ENCODE measurements at regions of chr11 and their contacts with region 1.

Region 1: DNA sequence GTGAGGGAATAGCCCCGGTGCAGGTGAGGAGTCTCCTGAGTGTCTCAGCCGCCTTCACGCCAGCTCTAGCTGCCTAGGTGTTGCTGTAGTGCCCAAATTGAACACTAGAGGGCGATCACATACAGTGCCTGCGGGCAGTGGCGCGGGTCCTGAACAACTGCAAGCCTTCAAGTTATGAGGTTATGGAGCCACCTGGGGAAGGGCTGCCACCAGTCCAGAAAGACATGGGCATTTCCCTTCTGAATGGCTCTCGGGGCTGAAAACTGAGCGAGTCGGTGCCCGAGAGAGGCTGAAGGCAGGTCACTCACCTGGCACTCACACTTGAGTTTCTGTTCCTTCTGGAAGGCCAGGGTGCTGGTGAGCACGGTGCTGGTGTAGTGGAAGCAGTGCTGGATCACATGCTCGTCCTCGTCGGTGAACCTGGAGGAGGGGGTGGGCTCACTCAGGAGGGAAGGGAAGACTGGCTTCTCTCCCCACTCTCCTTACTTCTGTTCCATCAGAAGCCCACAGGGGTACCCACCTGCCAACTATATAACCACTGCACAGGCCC is 88.4 kb downstream of the PDE2A start:
- DNase-seq: peak; percentile 82
- H3K4me3 Mint-ChIP-seq: peak overlapping the region; percentile 75
- H3K27ac Mint-ChIP-seq: no peak overlapping the region
- H3K4me1 Mint-ChIP-seq: peaks cover 25% of the 10 kb centered on the region
- H3K27me3 Mint-ChIP-seq: peaks cover 16% of the 10 kb centered on the region

Region 2: GRCh38 chr11:72483412-72484186 is 102.2 kb before region 1 on chr11:
- CTCF ChIA-PET with region 1: interaction called, 5 read pairs
- intact Hi-C with region 1: loop called (anchors 1 kb)
- DNase-seq: peak; percentile 52
- H3K4me3 Mint-ChIP-seq: no peak overlapping the region
- H3K27ac Mint-ChIP-seq: peak overlapping the region; percentile 26
- H3K4me1 Mint-ChIP-seq: peaks cover 7% of the 10 kb centered on the region
- H3K27me3 Mint-ChIP-seq: no peaks in the 10 kb centered on the region

Region 3: DNA sequence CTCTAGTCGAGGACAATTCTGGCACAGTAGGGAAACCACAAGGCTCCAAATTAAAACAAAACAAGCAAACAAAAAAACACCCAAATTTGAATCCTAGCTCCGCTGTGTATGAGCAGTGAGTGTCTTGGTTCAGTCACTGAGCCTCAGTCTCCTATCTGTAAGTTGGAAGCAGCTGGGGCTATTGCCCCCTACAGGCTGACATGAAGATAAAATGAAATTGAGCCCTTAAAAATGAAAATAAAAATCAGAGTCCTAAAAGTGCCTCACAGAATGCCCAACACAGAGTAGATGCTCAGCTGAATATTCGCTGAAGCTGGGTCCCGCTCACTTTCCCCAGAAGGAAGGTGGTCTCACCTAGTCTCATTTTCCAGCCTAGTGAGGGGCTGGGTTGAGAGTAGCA is 23.2 kb after region 1 on chr11:
- CTCF ChIA-PET with region 1: interaction called, 16 read pairs
- intact Hi-C with region 1: loop called (anchors 1 kb)
- DNase-seq: no peak
- H3K4me3 Mint-ChIP-seq: no peak overlapping the region
- H3K27ac Mint-ChIP-seq: no peak overlapping the region
- H3K4me1 Mint-ChIP-seq: peaks cover 2% of the 10 kb centered on the region
- H3K27me3 Mint-ChIP-seq: peaks cover 13% of the 10 kb centered on the region

Region 4: GRCh38 chr11:72642884-72643511 is 57.2 kb after region 1 on chr11:
- CTCF ChIA-PET with region 1: interaction called, 55 read pairs
- intact Hi-C with region 1: loop called (anchors 1 kb)
- DNase-seq: peak; percentile 55
- H3K4me3 Mint-ChIP-seq: peak overlapping the region; percentile 56
- H3K27ac Mint-ChIP-seq: no peak overlapping the region
- H3K4me1 Mint-ChIP-seq: no peaks in the 10 kb centered on the region
- H3K27me3 Mint-ChIP-seq: no peaks in the 10 kb centered on the region

Region 5: GRCh38 chr11:72683782-72684200 is 98.0 kb after region 1 on chr11:
- CTCF ChIA-PET with region 1: interaction called, 58 read pairs
- intact Hi-C with region 1: loop called (anchors 1 kb)
- DNase-seq: peak; percentile 81
- H3K4me3 Mint-ChIP-seq: no peak overlapping the region
- H3K27ac Mint-ChIP-seq: no peak overlapping the region
- H3K4me1 Mint-ChIP-seq: peaks cover 13% of the 10 kb centered on the region
- H3K27me3 Mint-ChIP-seq: no peaks in the 10 kb centered on the region

Region 6: GRCh38 chr11:72814286-72815109 is 228.7 kb after region 1 on chr11 and contains the start of gene ATG16L2:
- CTCF ChIA-PET with region 1: no interaction called
- intact Hi-C with region 1: loop called (anchors 10 kb)
- DNase-seq: peak; percentile 89
- H3K4me3 Mint-ChIP-seq: peak within 1 kb of the TSS; percentile 100
- H3K27ac Mint-ChIP-seq: peak within 1 kb of the TSS; percentile 97
- H3K4me1 Mint-ChIP-seq: peaks cover 34% of the 10 kb centered on the region
- H3K27me3 Mint-ChIP-seq: no peaks in the 10 kb centered on the region
- total RNA-seq, gene ATG16L2: 105 to 114 TPM

Region 7: GRCh38 chr11:73012121-73012863 is 426.5 kb after region 1 on chr11:
- CTCF ChIA-PET with region 1: no interaction called
- intact Hi-C with region 1: no loop called
- DNase-seq: no peak
- H3K4me3 Mint-ChIP-seq: no peak overlapping the region
- H3K27ac Mint-ChIP-seq: no peak overlapping the region
- H3K4me1 Mint-ChIP-seq: no peaks in the 10 kb centered on the region
- H3K27me3 Mint-ChIP-seq: no peaks in the 10 kb centered on the region